Mammary epithelial cell (primary cell): ENCODE measurements at regions of chr6 and their contacts with region 1.

Region 1: GRCh38 chr6:3913077-3913957 is 64.1 kb downstream of the FAM50B start:
- DNase-seq: peak; percentile 96
- H3K4me3 ChIP-seq: peak overlapping the region in 2 of 3 experiments; percentile 14 to 23
- H3K27ac ChIP-seq: peak overlapping the region; percentile 65
- H3K4me1 ChIP-seq: peaks cover 36% of the 10 kb centered on the region
- H3K27me3 ChIP-seq: no peaks in the 10 kb centered on the region
- CTCF ChIP-seq: no peak

Region 2: GRCh38 chr6:3390698-3391097 is 522.6 kb before region 1 on chr6:
- CTCF ChIA-PET with region 1: no interaction called
- dilution Hi-C with region 1: no loop called
- in situ Hi-C with region 1: no loop called
- intact Hi-C with region 1: loop called (anchors 10 kb)
- DNase-seq: peak; percentile 96
- H3K4me3 ChIP-seq: no peak overlapping the region
- H3K27ac ChIP-seq: peak overlapping the region; percentile 94
- H3K4me1 ChIP-seq: peaks cover 59% of the 10 kb centered on the region
- H3K27me3 ChIP-seq: no peaks in the 10 kb centered on the region
- CTCF ChIP-seq: no peak

Region 3: GRCh38 chr6:3868544-3868943 is 44.8 kb before region 1 on chr6:
- CTCF ChIA-PET with region 1: no interaction called
- dilution Hi-C with region 1: no loop called
- in situ Hi-C with region 1: no loop called
- intact Hi-C with region 1: loop called (anchors 5 kb)
- DNase-seq: no peak
- H3K4me3 ChIP-seq: no peak overlapping the region
- H3K27ac ChIP-seq: no peak overlapping the region
- H3K4me1 ChIP-seq: peaks cover 11% of the 10 kb centered on the region
- H3K27me3 ChIP-seq: no peaks in the 10 kb centered on the region
- CTCF ChIP-seq: no peak